Sigmoid colon (tissue), 7 donors: ENCODE measurements at regions of chrX and their contacts with region 1.

Region 1: DNA sequence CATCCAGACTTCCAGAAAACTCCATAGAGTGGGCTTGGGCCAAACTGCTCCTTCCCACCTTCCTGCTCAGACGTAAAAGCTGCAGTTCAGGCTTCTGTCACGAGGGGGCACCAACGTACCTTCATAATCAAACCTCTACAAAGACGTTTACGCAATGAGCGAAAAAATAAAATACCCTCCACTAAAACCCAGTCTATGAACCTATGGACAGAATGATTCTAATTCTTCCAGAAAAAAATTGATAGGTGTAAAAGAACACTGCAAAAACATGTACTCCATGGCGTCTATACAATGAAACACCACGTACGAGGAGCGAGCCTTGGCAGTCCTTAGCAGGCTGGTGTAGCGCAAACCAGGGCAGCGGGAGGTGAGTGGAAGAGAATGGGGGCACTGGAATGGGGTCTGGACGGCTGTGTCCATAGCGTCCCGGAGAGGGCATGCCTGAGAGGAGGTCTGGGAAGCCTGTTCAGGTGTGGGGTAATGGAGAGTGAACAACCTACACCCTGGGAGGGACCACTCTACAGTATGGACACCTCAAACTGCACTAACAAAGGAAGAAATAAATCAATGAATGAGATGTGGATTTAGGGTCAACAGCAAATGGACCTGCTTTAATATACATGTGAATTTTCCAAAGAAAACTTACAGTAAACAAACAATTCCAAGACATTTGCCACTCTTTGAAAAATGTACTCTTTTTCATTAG is 14.4 kb upstream of the RAB40A start:
- DNase-seq: peak; percentile 89
- H3K4me3 ChIP-seq: peak overlapping the region; percentile 15 to 46 (median 38)
- H3K27ac ChIP-seq: peak overlapping the region; percentile 17 to 46 (median 31)
- H3K4me1 ChIP-seq: no peaks in the 10 kb centered on the region
- H3K27me3 ChIP-seq: no peaks in the 10 kb centered on the region
- CTCF ChIP-seq: peak; percentile 58 to 74 (median 68)
- EP300 ChIP-seq: no peak
- POLR2A ChIP-seq: no peak

Region 2: DNA sequence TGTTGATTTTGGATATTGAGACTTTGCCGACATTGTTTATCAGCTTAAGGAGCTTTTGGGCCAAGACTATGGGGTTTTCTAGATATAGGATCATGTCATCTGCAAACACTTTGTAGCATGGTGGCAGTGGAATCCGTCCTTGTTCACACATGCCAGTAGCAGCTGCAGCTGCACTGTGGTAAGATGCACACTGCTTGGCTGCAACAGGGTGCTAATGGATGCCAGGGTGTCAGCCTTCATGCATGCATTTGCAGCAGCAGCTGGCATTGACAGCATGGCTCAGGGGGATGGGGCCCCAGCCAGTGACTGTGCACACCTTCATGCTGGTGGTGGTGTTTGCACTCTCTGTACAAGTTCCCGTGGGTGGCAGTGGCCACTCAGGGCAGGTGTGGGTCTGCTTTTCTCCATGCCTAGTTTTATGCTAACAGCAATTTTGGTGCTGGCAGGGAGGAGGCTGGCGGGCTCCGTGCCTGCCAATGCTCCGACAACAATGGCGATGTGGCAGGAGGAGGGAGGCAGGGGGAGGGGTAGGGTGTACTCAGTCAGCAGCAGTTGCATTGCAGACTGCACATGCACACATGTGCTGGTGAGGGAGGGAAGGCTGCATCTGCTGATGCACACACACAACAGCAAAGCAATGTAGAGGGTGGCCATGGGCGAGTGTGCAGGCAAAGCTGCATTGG is 119.8 kb before region 1 on chrX:
- intact Hi-C with region 1: no loop called
- DNase-seq: no peak
- H3K4me3 ChIP-seq: no peak overlapping the region
- H3K27ac ChIP-seq: no peak overlapping the region
- H3K4me1 ChIP-seq: no peaks in the 10 kb centered on the region
- H3K27me3 ChIP-seq: no peaks in the 10 kb centered on the region
- CTCF ChIP-seq: no peak
- EP300 ChIP-seq: no peak
- POLR2A ChIP-seq: no peak

Region 3: DNA sequence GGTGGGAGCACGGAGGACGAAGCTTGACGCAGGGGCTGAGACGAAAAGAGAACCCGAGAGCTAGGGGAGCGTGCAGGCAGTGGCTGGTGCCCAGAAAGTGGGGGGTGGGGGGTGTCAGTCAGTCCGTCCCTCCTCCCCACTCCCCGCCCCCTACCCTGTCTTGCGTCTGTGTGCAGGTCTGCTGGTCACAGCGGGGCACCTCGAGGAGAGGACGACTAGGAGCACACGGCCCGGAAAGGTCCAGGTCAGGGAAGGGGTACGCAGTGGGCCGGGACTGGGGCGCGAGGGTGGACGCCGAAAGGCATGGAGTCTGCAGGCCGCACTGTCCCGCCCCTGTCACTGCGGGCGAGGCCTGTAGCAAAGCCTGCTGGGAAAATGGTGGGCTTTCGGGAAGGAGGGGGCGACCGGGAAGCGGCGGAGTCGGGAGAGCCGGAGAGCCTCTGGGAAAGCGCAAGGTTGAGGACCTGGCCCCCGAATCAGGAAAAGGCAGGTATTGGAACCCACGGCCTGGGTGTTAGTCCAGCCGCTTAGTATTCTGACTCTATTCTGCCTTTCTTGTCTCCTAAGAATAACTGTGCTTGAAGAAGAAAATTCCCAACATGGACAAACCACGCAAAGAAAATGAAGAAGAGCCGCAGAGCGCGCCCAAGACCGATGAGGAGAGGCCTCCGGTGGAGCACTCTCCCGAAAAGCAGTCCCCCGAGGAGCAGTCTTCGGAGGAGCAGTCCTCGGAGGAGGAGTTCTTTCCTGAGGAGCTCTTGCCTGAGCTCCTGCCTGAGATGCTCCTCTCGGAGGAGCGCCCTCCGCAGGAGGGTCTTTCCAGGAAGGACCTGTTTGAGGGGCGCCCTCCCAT is 95.9 kb after region 1 on chrX:
- intact Hi-C with region 1: loop called (anchors 5 kb)
- DNase-seq: peak; percentile 83
- H3K4me3 ChIP-seq: peak overlapping the region; percentile 46 to 65 (median 60)
- H3K27ac ChIP-seq: peak overlapping the region; percentile 89 to 95 (median 92)
- H3K4me1 ChIP-seq: peaks cover 0 to 17% (median 3%) of the 10 kb centered on the region in 4 donors
- H3K27me3 ChIP-seq: no peaks in the 10 kb centered on the region
- CTCF ChIP-seq: peak in 2 of 4 experiments; percentile 15 to 30
- EP300 ChIP-seq: no peak
- POLR2A ChIP-seq: peak; percentile 15 to 21

Region 4: DNA sequence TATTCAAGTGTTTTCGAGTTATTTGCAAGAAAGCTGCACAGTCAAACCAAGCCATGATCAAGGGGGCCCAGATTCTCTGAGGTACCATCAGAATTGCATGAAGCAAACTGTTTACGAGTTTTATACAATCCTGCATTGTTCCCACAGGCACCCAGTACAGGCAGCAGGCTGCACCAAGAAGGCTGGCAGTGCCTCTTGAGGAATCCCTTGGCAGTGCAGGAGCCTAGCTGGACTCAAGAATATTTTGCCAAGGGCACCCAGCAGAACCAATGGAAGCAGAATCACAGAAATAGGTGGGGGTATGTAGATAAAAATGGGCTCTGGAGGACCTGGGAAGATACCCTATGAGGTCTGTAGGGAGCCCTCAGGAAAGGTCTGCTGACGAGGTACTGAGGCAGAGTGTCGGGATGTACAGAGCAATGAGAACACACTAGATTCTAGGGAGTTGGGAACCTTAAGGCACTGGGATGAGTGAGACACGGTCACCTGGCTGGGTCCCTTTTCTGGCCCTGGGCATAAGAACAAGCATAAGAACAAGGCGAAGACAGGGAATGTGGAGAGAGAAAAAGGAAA is 240.5 kb after region 1 on chrX:
- intact Hi-C with region 1: loop called (anchors 2 kb)
- DNase-seq: no peak
- H3K4me3 ChIP-seq: no peak overlapping the region
- H3K27ac ChIP-seq: no peak overlapping the region
- H3K4me1 ChIP-seq: peaks cover 0 to 5% (median 0%) of the 10 kb centered on the region in 4 donors
- H3K27me3 ChIP-seq: no peaks in the 10 kb centered on the region
- CTCF ChIP-seq: peak in 3 of 4 experiments; percentile 14 to 36 (median 25)
- EP300 ChIP-seq: no peak
- POLR2A ChIP-seq: no peak

Region 5: GRCh38 chrX:103817502-103817901 is 283.8 kb after region 1 on chrX:
- intact Hi-C with region 1: loop called (anchors 1 kb)
- DNase-seq: no peak
- H3K4me3 ChIP-seq: no peak overlapping the region
- H3K27ac ChIP-seq: no peak overlapping the region
- H3K4me1 ChIP-seq: no peaks in the 10 kb centered on the region
- H3K27me3 ChIP-seq: no peaks in the 10 kb centered on the region
- CTCF ChIP-seq: peak; percentile 33 to 66 (median 35)
- EP300 ChIP-seq: no peak
- POLR2A ChIP-seq: no peak